ENCODE measurements at regions of chr9 and their contacts with region 1.

Region 1: DNA sequence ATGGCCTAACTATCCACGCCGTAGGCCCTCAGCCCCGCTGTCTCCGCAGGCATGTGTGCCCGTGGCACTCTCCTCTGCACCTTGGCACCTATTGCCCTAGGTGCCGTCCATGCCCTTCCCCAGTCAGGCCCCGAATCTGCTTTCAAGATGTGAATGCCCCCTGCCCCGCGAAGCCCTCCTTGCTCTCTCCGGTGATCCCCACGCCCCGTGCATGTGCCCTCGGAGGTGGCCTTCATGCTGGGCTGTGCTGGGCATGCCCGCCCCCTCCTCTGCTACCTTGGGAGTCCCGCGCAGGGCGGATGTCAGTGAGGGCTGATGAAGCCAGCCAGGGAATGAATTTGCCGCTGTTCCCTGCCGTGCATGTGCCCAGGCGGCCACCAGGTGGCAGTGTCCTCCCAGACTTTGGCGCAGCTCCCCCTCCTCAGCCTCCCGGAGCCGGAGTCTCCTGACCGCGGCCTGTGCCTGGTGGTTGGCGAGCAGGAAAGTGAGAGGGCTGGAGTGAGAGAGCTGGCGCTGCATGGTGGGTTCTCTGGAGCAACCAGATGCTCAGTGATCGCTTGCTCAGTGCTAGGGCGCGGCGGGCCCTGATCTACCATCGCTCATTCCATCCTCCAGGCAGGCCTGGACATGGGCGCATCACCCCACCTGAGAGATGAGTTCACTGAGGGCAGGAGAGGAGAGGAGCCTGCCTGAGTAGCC is 112.9 kb upstream of the LMX1B start:
- DNase-seq: peak in 1 of 2 donors; percentile 84
- H3K4me3 ChIP-seq: no peak overlapping the region
- H3K27ac ChIP-seq: no peak overlapping the region
- H3K4me1 ChIP-seq: peaks cover 4 to 12% of the 10 kb centered on the region in 2 donors
- H3K27me3 ChIP-seq: no peaks in the 10 kb centered on the region
- CTCF ChIP-seq: peak; percentile 85 to 94 (median 91)

Region 2: GRCh38 chr9:126386088-126386487 is 114.7 kb before region 1 on chr9:
- intact Hi-C with region 1: no loop called
- DNase-seq: peak in 1 of 2 donors; percentile 22
- H3K4me3 ChIP-seq: no peak overlapping the region
- H3K27ac ChIP-seq: no peak overlapping the region
- H3K4me1 ChIP-seq: no peaks in the 10 kb centered on the region
- H3K27me3 ChIP-seq: no peaks in the 10 kb centered on the region
- CTCF ChIP-seq: no peak

Region 3: DNA sequence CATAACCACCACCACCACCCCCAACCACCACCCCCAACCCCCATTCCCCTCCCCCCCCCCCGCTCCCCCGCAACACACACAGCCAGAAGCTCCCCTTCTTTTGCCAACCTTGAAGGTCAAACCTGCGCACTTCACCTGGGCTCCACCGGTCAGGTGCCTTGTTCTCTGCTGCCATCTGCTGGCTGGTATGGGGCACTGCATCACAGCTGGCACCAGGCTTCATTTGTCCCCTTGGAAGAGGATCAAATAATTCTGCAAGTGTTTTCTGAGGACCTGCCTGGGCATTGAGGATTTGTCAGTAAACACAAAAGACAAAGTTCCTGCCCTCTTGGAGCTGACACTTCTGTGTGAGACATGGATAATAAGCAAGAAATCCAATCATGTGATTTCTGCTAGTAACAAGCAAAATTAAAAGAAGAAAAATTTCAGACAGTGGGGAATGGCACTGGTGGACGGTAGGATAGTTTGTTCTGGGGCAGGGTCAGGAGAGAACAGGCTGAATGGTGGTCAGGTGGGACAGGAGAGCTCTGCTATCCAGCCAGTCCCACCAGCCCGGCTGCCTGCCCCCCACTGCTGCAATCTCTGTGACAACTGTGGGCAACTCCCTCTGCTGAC is 57.3 kb after region 1 on chr9:
- intact Hi-C with region 1: loop called (anchors 1 kb)
- DNase-seq: no peak
- H3K4me3 ChIP-seq: no peak overlapping the region
- H3K27ac ChIP-seq: no peak overlapping the region
- H3K4me1 ChIP-seq: no peaks in the 10 kb centered on the region
- H3K27me3 ChIP-seq: no peaks in the 10 kb centered on the region
- CTCF ChIP-seq: peak; percentile 73 to 91 (median 86)

Region 4: GRCh38 chr9:126587187-126588185 is 86.7 kb after region 1 on chr9:
- intact Hi-C with region 1: no loop called
- DNase-seq: no peak
- H3K4me3 ChIP-seq: no peak overlapping the region
- H3K27ac ChIP-seq: no peak overlapping the region
- H3K4me1 ChIP-seq: peaks cover 0 to 6% of the 10 kb centered on the region in 2 donors
- H3K27me3 ChIP-seq: no peaks in the 10 kb centered on the region
- CTCF ChIP-seq: no peak

Measured in ascending aorta (tissue), 2 donors.